Mucosa of descending colon (tissue), 3 donors: ENCODE measurements at regions of chr12 and their contacts with region 1.

Region 1: DNA sequence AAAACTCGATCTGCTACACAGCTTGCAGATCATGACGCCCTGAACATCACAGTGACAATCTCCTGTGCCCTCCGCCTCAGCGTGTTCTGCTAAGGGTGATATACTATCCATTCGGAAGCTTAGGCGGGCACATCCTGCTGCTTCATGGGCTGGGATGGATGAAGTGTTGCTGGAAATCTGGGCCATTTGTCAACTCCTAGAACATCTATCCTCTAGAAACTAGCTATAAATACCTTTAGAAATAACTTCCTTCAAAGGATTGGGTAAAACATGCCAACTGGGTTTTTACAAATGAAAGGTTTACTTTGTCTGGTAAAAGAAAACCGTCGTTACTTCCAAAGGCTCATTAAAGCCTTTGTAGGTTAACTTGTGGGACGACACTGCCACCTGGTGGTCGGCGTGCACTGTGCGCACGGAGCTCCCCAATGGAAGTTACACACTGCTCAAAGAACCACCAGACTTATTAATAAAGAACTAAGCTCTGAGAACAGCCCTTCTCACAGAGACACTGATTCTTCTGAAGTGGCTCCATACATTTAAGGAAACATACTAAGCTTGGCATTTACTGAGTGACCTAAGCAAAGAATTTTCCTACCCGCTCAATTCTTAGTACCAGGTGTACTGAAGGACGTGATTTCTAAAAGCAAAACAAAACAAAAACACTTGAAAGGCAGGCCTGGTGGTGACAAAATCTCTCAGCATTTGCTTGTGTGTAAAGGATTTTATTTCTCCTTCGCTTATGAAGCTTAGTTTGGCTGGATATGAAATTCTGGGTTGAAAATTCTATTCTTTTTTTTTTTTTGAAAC is 21.6 kb upstream of the CACNA2D4 start:
- DNase-seq: peak; percentile 87 to 96 (median 94)
- ATAC-seq: peak; percentile 76
- H3K4me3 ChIP-seq: no peak overlapping the region
- H3K4me1 ChIP-seq: peaks cover 27% of the 10 kb centered on the region
- CTCF ChIP-seq: peak; percentile 81

Region 2: GRCh38 chr12:1634590-1635191 is 305.3 kb before region 1 on chr12:
- intact Hi-C with region 1: loop called in 1 of 2 experiments (anchors 10 kb)
- DNase-seq: peak; percentile 77 to 86 (median 85)
- ATAC-seq: peak; percentile 78
- H3K4me3 ChIP-seq: no peak overlapping the region
- H3K4me1 ChIP-seq: peaks cover 11% of the 10 kb centered on the region
- CTCF ChIP-seq: peak; percentile 58

Region 3: DNA sequence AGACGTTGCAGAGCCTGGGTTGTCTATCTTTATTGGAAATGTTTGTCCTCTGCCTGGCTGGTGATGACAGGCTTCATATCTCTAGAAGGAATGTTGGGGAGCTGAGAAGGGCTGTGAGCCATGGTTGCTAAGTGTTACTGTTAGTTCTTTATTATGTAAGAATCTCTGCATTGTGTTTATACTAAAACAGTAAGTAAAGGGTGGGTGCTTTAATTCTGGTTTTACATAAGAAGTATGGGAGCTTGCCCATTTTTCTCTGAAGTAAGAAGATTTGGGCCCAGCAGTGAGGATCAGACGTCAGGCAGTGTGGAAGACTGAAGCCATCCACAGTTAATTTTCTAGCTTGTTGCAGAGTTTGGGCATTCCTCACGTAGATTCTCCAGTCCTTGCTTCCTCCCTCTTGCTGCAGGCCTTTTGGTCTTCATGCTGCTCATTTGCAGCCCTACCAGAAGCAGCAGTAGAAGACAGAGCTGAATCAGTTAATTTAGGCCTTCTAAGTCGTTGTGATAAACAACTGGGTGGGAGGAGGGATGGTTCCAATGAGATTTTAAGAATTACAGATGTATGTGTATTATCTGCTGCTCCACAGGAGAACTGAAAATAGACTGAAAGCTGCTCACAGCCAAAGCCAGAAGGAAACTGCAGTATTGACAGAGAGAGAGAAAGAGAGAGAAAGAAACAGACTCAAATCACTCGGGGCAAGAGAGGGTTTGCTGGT is 289.6 kb before region 1 on chr12:
- intact Hi-C with region 1: loop called in 1 of 2 experiments (anchors 10 kb)
- DNase-seq: no peak
- ATAC-seq: no peak
- H3K4me3 ChIP-seq: no peak overlapping the region
- H3K4me1 ChIP-seq: no peaks in the 10 kb centered on the region
- CTCF ChIP-seq: no peak